GM13976 (cell line): ENCODE measurements at regions of chr17 and their contacts with region 1.

Region 1: GRCh38 chr17:9402590-9403199 is 172.9 kb downstream of the STX8 start:
- DNase-seq: peak; percentile 47
- CTCF ChIP-seq: peak; percentile 53

Region 2: GRCh38 chr17:9512323-9513168 is 109.9 kb after region 1 on chr17:
- in situ Hi-C with region 1: loop called (anchors 10 kb)
- DNase-seq: no peak
- CTCF ChIP-seq: no peak

Region 3: DNA sequence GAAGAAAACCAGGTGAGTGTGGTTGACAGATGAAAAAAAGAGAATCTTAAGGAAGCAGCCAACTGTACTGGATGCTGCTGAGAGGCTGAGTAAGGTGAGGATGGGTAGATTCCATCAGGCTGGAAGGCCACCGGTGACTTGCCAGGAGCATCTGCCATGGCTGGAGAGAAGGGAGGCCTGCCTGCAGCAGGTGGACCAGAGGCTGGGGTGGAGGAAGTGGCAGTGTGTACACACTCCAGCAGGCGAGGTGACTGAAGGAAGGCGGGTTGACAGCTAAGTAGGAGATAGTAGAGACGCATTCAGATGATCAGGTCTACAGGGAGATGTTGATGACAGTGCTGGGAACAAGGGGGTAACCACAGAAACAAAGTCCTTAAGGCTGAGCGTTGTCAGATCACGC is 312.1 kb after region 1 on chr17:
- in situ Hi-C with region 1: no loop called
- DNase-seq: no peak
- CTCF ChIP-seq: no peak

Region 4: DNA sequence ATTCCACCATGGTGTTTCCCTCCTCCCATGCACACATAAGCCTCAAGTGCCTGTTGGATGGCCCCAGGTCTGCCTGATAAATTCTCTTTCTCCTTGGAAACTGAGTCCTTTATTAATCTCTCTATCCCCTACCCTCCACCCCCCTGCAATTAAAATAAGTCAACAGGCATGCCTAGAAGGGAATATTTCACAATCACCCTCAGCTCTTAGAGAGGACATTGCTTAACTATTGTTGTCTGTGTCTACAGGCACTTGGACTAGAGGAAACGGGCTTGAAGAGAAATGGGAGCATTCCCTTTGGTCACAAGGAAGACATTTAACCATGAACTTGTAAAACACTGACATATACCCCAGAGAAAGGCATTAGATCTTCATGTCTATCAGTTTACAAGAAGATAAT is 462.9 kb after region 1 on chr17:
- in situ Hi-C with region 1: no loop called
- DNase-seq: no peak
- CTCF ChIP-seq: no peak